ENCODE measurements at regions of chr10 and their contacts with region 1.

Region 1: DNA sequence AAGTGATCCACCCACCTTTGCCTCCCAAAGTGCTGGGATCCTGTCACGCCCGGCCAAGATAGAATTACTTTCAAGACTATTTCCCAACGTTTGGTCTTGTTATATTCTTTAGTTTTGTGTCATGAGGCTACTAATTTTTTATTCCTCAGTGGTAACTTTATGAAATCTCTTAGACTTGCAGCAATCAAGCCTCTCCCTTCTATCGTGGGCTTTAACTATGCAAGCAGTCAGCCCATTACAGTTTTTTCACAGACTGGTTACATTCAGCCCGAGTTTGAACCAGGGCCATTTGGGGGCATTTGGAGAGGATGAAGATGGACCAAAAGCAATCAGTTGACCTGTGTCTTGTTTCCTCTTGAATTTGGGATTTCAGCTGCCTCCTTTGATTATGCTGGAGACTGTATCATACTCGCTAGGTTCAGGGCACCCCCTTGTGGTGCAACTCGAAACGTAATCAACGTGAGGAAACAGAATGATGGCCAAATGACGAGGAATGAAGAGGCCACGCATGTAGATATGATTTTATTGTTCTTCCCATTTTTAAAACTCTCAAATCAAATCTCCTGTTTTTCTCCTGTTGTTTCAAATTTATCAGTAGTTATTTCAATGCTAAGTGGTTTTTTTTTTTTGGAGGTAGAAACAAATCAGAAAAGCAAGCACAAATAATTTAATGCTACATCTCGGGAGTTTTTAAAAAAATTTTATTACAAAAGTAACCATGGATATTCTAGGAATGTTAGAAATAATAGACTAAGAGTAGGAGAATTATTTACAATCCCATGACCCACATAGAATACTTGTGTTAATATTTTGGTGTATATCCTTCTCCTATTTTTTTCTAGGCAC is 151.6 kb downstream of the KIAA1217 start:
- DNase-seq: peak; percentile 50
- CTCF ChIP-seq: peak; percentile 62

Region 2: GRCh38 chr10:24331457-24331856 is 29.0 kb before region 1 on chr10:
- CTCF ChIA-PET with region 1: no interaction called
- POLR2A ChIA-PET with region 1: no interaction called
- DNase-seq: no peak
- CTCF ChIP-seq: no peak

Region 3: GRCh38 chr10:24374134-24374915 is 13.8 kb after region 1 on chr10:
- CTCF ChIA-PET with region 1: interaction called, 32 read pairs
- POLR2A ChIA-PET with region 1: no interaction called
- DNase-seq: no peak
- CTCF ChIP-seq: no peak

Measured in GM10248 (cell line).